Testis (tissue), 5 donors: ENCODE measurements at regions of chr1 and their contacts with region 1.

Region 1: DNA sequence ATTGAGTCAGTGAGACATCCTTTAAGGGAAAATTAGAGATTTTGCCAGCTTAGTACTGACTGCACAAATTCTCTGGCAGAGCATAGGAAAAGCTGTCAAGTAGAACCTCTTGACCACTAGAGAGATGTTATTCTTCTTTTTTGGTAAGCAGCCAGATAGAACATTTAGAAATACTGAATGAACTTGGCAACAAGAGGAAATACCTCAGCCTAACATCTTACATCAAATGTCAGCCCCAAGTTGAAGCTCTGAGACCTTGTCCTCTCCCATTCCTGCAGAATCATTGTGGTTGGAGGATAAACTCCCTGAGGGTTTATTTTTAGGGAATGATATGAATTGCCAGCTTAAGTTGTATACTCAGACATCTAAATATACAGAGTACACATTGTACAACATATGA is 53.5 kb downstream of the MIGA1 start:
- DNase-seq: no peak
- H3K4me3 ChIP-seq: no peak overlapping the region
- H3K27ac ChIP-seq: peak overlapping the region in 1 of 2 donors; percentile 29
- H3K4me1 ChIP-seq: peaks cover 10% of the 10 kb centered on the region
- H3K27me3 ChIP-seq: no peaks in the 10 kb centered on the region
- CTCF ChIP-seq: no peak
- POLR2A ChIP-seq: no peak

Region 2: GRCh38 chr1:77888081-77888780 is 55.3 kb after region 1 on chr1 and contains the start of gene NEXN:
- intact Hi-C with region 1: loop called (anchors 10 kb)
- DNase-seq: peak; percentile 78
- H3K4me3 ChIP-seq: peak within 1 kb of the TSS; percentile 69
- H3K27ac ChIP-seq: peak within 1 kb of the TSS; percentile 57 to 93
- H3K4me1 ChIP-seq: peaks cover 8% of the 10 kb centered on the region
- H3K27me3 ChIP-seq: no peaks in the 10 kb centered on the region
- CTCF ChIP-seq: no peak
- POLR2A ChIP-seq: no peak
- total RNA-seq, gene NEXN: 4.6 to 10.6 TPM

Region 3: DNA sequence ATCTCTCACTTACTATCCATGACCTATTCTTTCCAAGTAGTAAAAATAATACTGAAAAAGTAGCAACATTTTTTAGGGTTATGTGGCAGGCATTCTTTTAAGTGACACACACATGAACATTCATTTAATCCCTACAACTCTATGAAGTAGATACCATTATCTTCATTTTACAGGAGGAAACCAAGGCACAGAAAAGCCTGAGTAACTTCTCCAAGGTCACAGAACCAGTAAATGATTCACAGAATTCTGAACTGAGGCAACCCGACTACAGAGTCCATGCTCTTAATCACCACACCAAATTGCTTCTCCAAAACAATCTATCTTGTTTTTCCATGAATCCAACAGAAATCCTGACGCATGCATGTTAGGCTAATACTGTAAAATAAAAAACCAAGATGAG is 128.5 kb after region 1 on chr1:
- intact Hi-C with region 1: no loop called
- DNase-seq: no peak
- H3K4me3 ChIP-seq: no peak overlapping the region
- H3K27ac ChIP-seq: no peak overlapping the region
- H3K4me1 ChIP-seq: no peaks in the 10 kb centered on the region
- H3K27me3 ChIP-seq: no peaks in the 10 kb centered on the region
- CTCF ChIP-seq: no peak
- POLR2A ChIP-seq: no peak

Region 4: GRCh38 chr1:78095593-78095992 is 262.7 kb after region 1 on chr1:
- intact Hi-C with region 1: no loop called
- DNase-seq: no peak
- H3K4me3 ChIP-seq: no peak overlapping the region
- H3K27ac ChIP-seq: no peak overlapping the region
- H3K4me1 ChIP-seq: no peaks in the 10 kb centered on the region
- H3K27me3 ChIP-seq: no peaks in the 10 kb centered on the region
- CTCF ChIP-seq: no peak
- POLR2A ChIP-seq: no peak